Calu3 (cell line): ENCODE measurements at regions of chr5 and their contacts with region 1.

Region 1: DNA sequence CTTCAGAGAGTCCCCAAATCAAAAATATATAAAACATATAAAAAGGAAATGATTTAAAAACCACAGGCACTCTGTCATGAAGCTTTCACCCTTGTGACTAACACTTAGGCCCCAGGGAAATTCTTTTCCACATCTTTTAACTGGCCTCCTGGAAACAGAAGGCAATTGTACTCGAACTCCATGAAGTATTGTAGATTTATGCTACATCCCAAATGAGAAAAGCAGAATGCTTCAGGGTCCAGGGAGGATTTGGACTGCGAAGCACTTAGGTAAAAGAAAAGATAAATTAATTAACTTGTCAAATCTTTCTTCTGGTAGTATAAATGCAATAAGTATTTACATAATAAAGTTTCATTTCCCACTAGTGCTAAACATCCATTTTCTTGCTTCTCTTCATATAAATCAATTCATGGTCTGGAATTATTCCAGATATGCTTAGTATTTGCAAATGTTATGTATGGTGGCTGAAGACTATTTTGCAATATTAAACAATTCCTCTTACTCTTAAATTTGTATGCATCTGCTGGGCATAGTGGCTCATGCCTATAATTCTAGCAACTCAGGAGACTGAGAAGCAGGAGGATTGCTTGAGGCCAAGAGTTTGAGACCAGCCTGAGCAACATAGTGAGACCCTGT is 64.9 kb upstream of the ELL2 start:
- DNase-seq: peak; percentile 31
- H3K4me3 Mint-ChIP-seq: no peak overlapping the region
- H3K27ac Mint-ChIP-seq: peak overlapping the region; percentile 89
- H3K4me1 Mint-ChIP-seq: peaks cover 42% of the 10 kb centered on the region
- H3K27me3 Mint-ChIP-seq: no peaks in the 10 kb centered on the region
- CTCF ChIP-seq: no peak

Region 2: DNA sequence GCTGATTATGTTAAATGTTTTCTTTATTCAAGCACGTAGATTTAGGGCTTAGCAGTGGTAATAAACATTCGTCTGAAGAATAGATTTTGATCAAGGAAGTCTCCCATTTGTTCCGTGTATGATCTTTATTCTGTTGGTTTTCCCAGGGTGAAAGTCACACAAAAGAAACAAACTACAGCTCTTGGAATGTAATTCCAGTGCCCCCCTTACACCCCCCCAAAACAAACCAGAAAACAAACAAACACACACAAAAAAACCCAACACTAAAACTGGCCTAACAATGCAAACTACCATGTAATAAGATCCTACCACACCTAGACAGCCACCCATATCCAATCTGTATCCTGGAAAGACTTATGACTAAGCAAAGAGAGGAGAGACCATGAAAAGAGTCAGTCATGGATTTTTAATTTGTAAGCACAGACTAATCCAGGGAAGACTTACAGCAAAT is 131.3 kb after region 1 on chr5:
- CTCF ChIA-PET with region 1: no interaction called
- intact Hi-C with region 1: loop called (anchors 5 kb)
- DNase-seq: no peak
- H3K4me3 Mint-ChIP-seq: peak overlapping the region; percentile 31
- H3K27ac Mint-ChIP-seq: peak overlapping the region; percentile 86
- H3K4me1 Mint-ChIP-seq: peaks cover 15% of the 10 kb centered on the region
- H3K27me3 Mint-ChIP-seq: no peaks in the 10 kb centered on the region
- CTCF ChIP-seq: no peak